WTC11 (cell line): ENCODE measurements at regions of chr11 and their contacts with region 1.

Region 1: GRCh38 chr11:128936606-128937251 is 5.9 kb downstream of the TP53AIP1 start:
- DNase-seq: peak; percentile 70
- ATAC-seq: peak; percentile 71
- H3K4me3 Mint-ChIP-seq: no peak overlapping the region
- H3K27ac Mint-ChIP-seq: 0 out of 2 replicates have a peak overlapping the region, but pooled peaks have one; percentile 41
- H3K4me1 Mint-ChIP-seq: peaks cover 22% of the 10 kb centered on the region
- H3K27me3 Mint-ChIP-seq: peaks cover 76% of the 10 kb centered on the region
- CTCF ChIP-seq: no peak

Region 2: GRCh38 chr11:128884703-128885338 is 51.9 kb before region 1 on chr11:
- CTCF ChIA-PET with region 1: interaction called, 15 read pairs
- POLR2A ChIA-PET with region 1: no interaction called
- DNase-seq: peak; percentile 67
- ATAC-seq: peak; percentile 62
- H3K4me3 Mint-ChIP-seq: no peak overlapping the region
- H3K27ac Mint-ChIP-seq: no peak overlapping the region
- H3K4me1 Mint-ChIP-seq: peaks cover 32% of the 10 kb centered on the region
- H3K27me3 Mint-ChIP-seq: peaks cover 75% of the 10 kb centered on the region
- CTCF ChIP-seq: peak; percentile 78

Region 3: GRCh38 chr11:128917144-128917724 is 19.5 kb before region 1 on chr11:
- CTCF ChIA-PET with region 1: no interaction called
- POLR2A ChIA-PET with region 1: no interaction called
- DNase-seq: no peak
- ATAC-seq: no peak
- H3K4me3 Mint-ChIP-seq: no peak overlapping the region
- H3K27ac Mint-ChIP-seq: no peak overlapping the region
- H3K4me1 Mint-ChIP-seq: no peaks in the 10 kb centered on the region
- H3K27me3 Mint-ChIP-seq: peaks cover 23% of the 10 kb centered on the region
- CTCF ChIP-seq: no peak

Region 4: GRCh38 chr11:128981254-128981653 is 44.5 kb after region 1 on chr11:
- CTCF ChIA-PET with region 1: no interaction called
- POLR2A ChIA-PET with region 1: no interaction called
- DNase-seq: no peak
- ATAC-seq: no peak
- H3K4me3 Mint-ChIP-seq: no peak overlapping the region
- H3K27ac Mint-ChIP-seq: no peak overlapping the region
- H3K4me1 Mint-ChIP-seq: no peaks in the 10 kb centered on the region
- H3K27me3 Mint-ChIP-seq: no peaks in the 10 kb centered on the region
- CTCF ChIP-seq: no peak